MCF 10A (cell line): ENCODE measurements at regions of chr21 and their contacts with region 1.

Region 1: GRCh38 chr21:41816220-41817165 is 49.6 kb upstream of the RIPK4 start:
- DNase-seq: peak; percentile 27
- H3K4me3 Mint-ChIP-seq: no peak overlapping the region
- H3K27ac Mint-ChIP-seq: peak overlapping the region; percentile 31
- H3K4me1 Mint-ChIP-seq: peaks cover 9% of the 10 kb centered on the region
- H3K27me3 Mint-ChIP-seq: no peaks in the 10 kb centered on the region
- CTCF ChIP-seq: peak; percentile 32

Region 2: GRCh38 chr21:41460578-41461527 is 355.6 kb before region 1 on chr21:
- CTCF ChIA-PET with region 1: interaction called, 3 read pairs
- POLR2A ChIA-PET with region 1: no interaction called
- intact Hi-C with region 1: loop called (anchors 5 kb)
- DNase-seq: peak; percentile 57
- H3K4me3 Mint-ChIP-seq: no peak overlapping the region
- H3K27ac Mint-ChIP-seq: no peak overlapping the region
- H3K4me1 Mint-ChIP-seq: no peaks in the 10 kb centered on the region
- H3K27me3 Mint-ChIP-seq: no peaks in the 10 kb centered on the region
- CTCF ChIP-seq: peak; percentile 73

Region 3: DNA sequence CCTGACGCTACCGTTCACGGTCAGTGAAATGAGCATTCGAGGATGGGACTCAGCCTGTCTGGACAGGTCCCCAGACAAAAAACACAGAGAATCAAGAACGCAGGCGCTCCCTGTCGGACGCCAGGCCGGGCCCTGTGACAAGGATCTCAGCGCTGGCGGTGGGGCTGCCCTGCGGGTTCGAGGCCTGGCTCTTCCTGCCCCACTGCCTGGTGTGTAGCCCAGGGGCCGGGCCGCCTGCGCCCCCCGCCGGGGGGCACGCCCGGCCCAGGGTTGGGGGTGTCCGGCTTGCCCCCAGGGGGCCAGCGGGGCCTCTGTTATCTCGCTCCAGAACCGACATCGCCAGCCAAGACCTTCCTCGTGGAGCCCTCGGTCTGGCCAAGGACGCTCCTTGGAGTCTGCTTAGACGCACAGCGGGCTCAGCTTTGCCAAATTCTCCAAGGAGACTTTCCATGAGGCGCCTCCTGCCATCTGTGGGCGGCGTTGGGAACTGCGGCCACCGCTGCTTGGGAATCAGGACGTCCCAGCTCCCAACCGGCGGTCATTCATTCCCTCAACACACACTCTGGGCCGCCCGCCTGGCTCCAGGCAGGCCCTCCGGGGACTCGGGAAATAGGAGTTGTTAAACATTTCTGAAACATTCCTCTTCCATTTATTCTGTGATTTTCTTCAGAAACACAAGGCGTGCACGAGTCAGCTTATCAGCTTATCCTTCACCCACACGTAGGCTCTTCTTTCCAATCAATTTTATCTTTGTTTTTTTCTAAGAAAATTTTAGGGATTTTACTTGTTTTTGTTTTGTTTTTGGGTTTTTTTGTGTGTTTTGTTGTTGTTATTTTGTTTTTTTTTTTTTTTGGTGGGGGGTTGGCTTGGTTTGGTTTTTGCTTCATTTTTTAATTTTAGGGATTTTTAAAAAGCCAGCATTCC is 38.3 kb before region 1 on chr21:
- CTCF ChIA-PET with region 1: interaction called, 14 read pairs
- POLR2A ChIA-PET with region 1: no interaction called
- intact Hi-C with region 1: loop called (anchors 1 kb)
- DNase-seq: peak; percentile 94
- H3K4me3 Mint-ChIP-seq: no peak overlapping the region
- H3K27ac Mint-ChIP-seq: peak overlapping the region; percentile 21
- H3K4me1 Mint-ChIP-seq: peaks cover 19% of the 10 kb centered on the region
- H3K27me3 Mint-ChIP-seq: no peaks in the 10 kb centered on the region
- CTCF ChIP-seq: peak; percentile 96

Region 4: GRCh38 chr21:42117229-42117966 is 300.9 kb after region 1 on chr21:
- CTCF ChIA-PET with region 1: interaction called, 4 read pairs
- POLR2A ChIA-PET with region 1: no interaction called
- intact Hi-C with region 1: loop called (anchors 1 kb)
- DNase-seq: peak; percentile 67
- H3K4me3 Mint-ChIP-seq: no peak overlapping the region
- H3K27ac Mint-ChIP-seq: no peak overlapping the region
- H3K4me1 Mint-ChIP-seq: peaks cover 40% of the 10 kb centered on the region
- H3K27me3 Mint-ChIP-seq: peaks cover 48% of the 10 kb centered on the region
- CTCF ChIP-seq: peak; percentile 85

Region 5: GRCh38 chr21:42463861-42464520 is 647.5 kb after region 1 on chr21:
- CTCF ChIA-PET with region 1: no interaction called
- POLR2A ChIA-PET with region 1: no interaction called
- intact Hi-C with region 1: no loop called
- DNase-seq: peak; percentile 81
- H3K4me3 Mint-ChIP-seq: no peak overlapping the region
- H3K27ac Mint-ChIP-seq: no peak overlapping the region
- H3K4me1 Mint-ChIP-seq: no peaks in the 10 kb centered on the region
- H3K27me3 Mint-ChIP-seq: no peaks in the 10 kb centered on the region
- CTCF ChIP-seq: no peak